ENCODE measurements at regions of chr22 and their contacts with region 1.

Region 1: DNA sequence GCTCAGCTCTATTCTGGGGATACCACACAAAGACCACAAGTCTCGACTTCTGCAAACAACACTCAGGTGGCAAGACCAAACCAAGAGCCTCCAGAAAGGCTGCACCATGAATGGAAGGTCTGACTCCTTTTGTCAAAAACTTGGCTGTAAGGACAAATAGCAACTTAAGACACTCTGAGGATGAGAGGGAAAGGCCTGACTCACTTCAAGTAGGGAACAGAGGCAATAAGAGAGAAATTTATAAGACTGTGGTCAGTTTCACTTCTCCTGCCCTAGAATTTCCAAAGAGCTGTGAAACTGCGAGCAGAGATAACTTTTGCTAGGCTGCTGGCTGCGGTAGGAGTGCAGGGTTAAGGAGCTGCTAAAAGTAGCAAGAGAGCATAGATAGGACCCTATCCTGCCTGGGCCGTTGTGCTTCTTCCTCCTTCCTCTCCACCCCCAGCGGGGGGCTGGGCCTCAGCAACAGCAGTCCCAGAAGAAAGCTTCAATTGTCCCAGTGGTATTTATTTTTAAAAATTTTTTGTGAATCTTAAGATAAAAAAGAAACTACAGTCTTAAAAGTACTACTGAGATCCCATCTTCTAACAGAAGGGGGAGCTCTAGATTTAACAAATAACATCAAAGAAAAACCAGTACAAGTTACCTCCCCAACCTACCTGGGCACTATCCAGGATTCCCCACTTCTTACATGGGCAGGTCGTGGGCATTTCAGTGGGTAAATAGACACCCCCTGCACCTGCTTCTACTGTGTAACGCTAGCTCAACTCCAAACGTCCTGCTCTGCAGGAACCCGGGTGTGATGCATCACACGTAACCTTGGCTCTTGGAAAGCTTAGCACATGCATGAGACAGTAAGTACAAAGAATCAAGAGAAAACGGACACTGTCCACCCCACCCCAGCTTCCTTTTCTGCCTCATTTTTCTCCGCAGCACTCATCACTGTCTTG is 66.4 kb downstream of the SGSM3 start:
- DNase-seq: peak; percentile 84
- ATAC-seq: peak; percentile 67
- H3K4me3 ChIP-seq: peak overlapping the region; percentile 6 to 44 (median 32)
- H3K4me3 Mint-ChIP-seq: peak overlapping the region; percentile 82
- H3K27ac ChIP-seq: peak overlapping the region; percentile 61 to 69
- H3K27ac Mint-ChIP-seq: peak overlapping the region; percentile 94
- H3K4me1 ChIP-seq: peaks cover 83 to 99% of the 10 kb centered on the region in 2 donors
- H3K4me1 Mint-ChIP-seq: peaks cover 87% of the 10 kb centered on the region
- H3K27me3 ChIP-seq: no peaks in the 10 kb centered on the region
- H3K27me3 Mint-ChIP-seq: no peaks in the 10 kb centered on the region
- CTCF ChIP-seq: peak; percentile 82

Region 2: DNA sequence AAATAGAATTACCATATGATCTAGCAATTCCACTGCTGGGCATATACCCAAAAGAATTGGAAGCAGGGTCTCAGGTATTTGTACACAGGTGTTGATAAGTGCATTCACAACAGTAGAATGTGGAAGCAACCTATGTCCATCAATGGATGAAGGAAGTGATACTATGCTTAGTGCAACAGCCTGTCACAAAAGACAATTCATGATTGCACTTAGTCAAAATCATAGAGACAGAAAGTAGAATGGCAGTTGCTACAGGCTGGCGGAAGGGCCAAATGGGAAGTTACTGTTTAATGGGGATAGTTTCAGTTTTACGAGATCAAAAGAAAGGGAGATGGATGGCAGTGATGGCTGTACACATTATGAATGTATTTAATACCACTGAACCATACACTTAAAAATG is 24.3 kb before region 1 on chr22:
- CTCF ChIA-PET with region 1: interaction called, 51 read pairs
- POLR2A ChIA-PET with region 1: interaction called, 7 read pairs
- intact Hi-C with region 1: loop called (anchors 1 kb)
- DNase-seq: peak; percentile 77
- ATAC-seq: peak; percentile 32
- H3K4me3 ChIP-seq: no peak overlapping the region
- H3K4me3 Mint-ChIP-seq: peak overlapping the region; percentile 66
- H3K27ac ChIP-seq: peak overlapping the region; percentile 54 to 57
- H3K27ac Mint-ChIP-seq: peak overlapping the region; percentile 83
- H3K4me1 ChIP-seq: peaks cover 62 to 63% of the 10 kb centered on the region in 2 donors
- H3K4me1 Mint-ChIP-seq: peaks cover 53% of the 10 kb centered on the region
- H3K27me3 ChIP-seq: no peaks in the 10 kb centered on the region
- H3K27me3 Mint-ChIP-seq: no peaks in the 10 kb centered on the region
- CTCF ChIP-seq: no peak

Region 3: DNA sequence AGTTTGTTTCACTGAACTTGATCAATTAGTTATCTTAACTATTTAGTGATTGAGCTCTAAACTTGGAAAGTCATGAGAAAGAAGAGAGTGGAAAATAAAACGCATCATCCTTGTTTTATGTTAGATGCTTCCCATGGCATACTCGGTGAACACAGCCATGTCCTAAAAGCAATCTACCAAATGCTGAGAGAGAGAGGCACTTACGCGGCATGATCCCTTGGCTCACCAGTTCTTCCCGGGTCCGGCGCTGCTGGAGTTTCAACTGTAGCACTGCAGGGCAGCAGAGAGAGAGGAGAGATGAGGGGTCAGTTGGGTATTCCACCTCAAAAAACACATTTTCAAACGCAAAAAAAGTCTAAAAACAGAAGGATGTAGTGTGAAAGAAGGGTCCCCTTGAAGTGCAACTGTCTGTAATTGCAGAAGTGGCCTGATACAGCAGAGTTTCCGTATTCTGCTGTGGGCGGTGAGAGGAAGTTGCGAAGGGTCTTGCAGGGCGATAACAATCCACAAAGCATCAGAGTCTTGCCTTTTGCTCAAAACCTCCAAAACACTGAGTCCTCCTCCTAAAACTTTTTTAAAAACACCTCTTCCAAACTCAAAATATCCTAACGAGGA is 26.3 kb after region 1 on chr22:
- CTCF ChIA-PET with region 1: interaction called, 20 read pairs
- POLR2A ChIA-PET with region 1: no interaction called
- intact Hi-C with region 1: loop called (anchors 1 kb)
- DNase-seq: peak; percentile 77
- ATAC-seq: peak; percentile 88
- H3K4me3 ChIP-seq: peak overlapping the region; percentile 73 to 99 (median 80)
- H3K4me3 Mint-ChIP-seq: peak overlapping the region; percentile 97
- H3K27ac ChIP-seq: peak overlapping the region; percentile 81 to 89
- H3K27ac Mint-ChIP-seq: peak overlapping the region; percentile 98
- H3K4me1 ChIP-seq: peaks cover 36 to 43% of the 10 kb centered on the region in 2 donors
- H3K4me1 Mint-ChIP-seq: peaks cover 55% of the 10 kb centered on the region
- H3K27me3 ChIP-seq: no peaks in the 10 kb centered on the region
- H3K27me3 Mint-ChIP-seq: no peaks in the 10 kb centered on the region
- CTCF ChIP-seq: no peak

Region 4: DNA sequence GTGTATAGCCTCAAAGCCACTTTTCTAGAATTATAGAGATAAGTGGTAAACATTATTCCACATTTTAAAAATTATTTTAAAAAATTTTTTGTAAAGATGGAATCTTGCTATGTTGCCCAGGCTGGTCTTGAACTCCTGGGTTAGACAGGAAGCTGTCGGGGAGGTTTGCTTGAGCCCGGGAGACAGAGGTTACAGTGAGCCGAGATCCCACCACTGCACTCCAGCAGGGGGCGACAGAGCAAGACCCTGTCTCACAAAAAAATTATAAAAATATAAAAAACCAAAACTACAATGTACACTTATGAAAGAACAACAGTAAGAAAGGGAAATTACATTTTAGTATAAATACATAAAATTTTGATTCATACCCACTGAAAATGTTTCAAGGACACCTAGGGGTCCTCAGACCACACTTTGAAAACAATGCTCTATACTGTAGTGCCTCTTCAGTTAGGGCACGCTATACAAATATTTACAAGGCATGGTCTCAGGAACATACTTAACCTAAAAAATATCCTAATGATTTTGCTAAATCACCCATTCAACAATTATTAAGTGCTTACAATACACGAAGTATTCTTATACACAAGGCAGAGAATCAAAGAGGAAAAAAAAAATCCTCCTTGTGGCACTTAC is 88.6 kb after region 1 on chr22:
- CTCF ChIA-PET with region 1: interaction called, 30 read pairs
- POLR2A ChIA-PET with region 1: no interaction called
- intact Hi-C with region 1: loop called (anchors 2 kb)
- DNase-seq: peak; percentile 68
- ATAC-seq: peak; percentile 63
- H3K4me3 ChIP-seq: no peak overlapping the region
- H3K4me3 Mint-ChIP-seq: no peak overlapping the region
- H3K27ac ChIP-seq: no peak overlapping the region
- H3K27ac Mint-ChIP-seq: no peak overlapping the region
- H3K4me1 ChIP-seq: peaks cover 7% of the 10 kb centered on the region in 2 donors
- H3K4me1 Mint-ChIP-seq: peaks cover 19% of the 10 kb centered on the region
- H3K27me3 ChIP-seq: no peaks in the 10 kb centered on the region
- H3K27me3 Mint-ChIP-seq: no peaks in the 10 kb centered on the region
- CTCF ChIP-seq: peak; percentile 89

Region 5: DNA sequence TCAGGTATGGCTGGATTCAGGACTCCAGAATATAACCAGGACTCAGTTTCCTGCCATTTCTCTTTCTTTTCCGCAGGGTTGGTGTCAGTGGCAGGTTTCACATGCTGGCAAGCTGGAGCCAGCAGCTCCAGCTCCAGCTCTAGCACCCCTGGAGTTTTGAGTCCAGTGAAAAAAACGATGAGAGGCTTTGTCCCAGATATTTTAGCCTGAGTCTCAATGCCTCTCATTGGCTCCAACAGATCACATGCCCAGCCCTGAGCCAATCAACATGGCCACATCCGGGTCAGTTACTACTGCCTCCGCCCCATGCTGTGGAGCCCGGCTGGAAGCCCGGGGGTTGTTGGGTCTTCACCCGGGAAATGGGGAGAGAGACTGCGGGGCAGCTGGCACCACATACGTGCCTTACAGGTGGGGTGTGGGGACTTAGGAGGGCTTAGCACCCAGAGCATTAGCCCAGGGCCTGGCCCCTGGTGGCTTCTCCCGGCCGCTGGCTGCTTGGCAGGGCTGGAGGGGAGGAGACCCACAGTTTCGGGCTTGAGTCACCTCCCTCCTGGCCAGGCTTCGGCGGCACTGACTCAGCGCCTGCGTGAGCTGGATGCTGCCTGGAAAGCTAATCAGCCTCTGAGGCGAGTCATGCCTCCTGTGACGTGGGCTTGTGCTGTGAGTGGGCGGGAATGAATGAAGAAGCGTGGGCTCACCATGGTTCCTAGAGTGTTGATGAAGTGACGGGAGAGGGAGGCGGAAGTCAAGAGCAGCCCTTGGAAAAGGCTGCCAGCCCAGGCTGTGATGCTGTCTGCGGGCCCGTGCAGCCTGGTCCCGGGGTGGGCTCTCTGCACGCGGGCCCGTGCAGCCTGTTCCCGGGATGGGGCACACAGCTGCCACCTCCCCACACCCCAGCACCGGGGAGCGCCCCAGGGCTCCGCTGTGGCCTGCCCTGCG is 215.1 kb after region 1 on chr22:
- CTCF ChIA-PET with region 1: interaction called, 232 read pairs
- POLR2A ChIA-PET with region 1: interaction called, 6 read pairs
- intact Hi-C with region 1: no loop called
- DNase-seq: peak; percentile 61
- ATAC-seq: peak; percentile 85
- H3K4me3 ChIP-seq: peak overlapping the region in 4 of 5 experiments; percentile 48 to 59 (median 50)
- H3K4me3 Mint-ChIP-seq: peak overlapping the region; percentile 86
- H3K27ac ChIP-seq: peak overlapping the region; percentile 29 to 41
- H3K27ac Mint-ChIP-seq: peak overlapping the region; percentile 88
- H3K4me1 ChIP-seq: peaks cover 0 to 6% of the 10 kb centered on the region in 2 donors
- H3K4me1 Mint-ChIP-seq: peaks cover 14% of the 10 kb centered on the region
- H3K27me3 ChIP-seq: no peaks in the 10 kb centered on the region
- H3K27me3 Mint-ChIP-seq: no peaks in the 10 kb centered on the region
- CTCF ChIP-seq: no peak

Region 6: GRCh38 chr22:40898850-40899357 is 462.1 kb after region 1 on chr22:
- CTCF ChIA-PET with region 1: interaction called, 14 read pairs
- POLR2A ChIA-PET with region 1: no interaction called
- intact Hi-C with region 1: loop called (anchors 2 kb)
- DNase-seq: peak; percentile 65
- ATAC-seq: peak; percentile 57
- H3K4me3 ChIP-seq: no peak overlapping the region
- H3K4me3 Mint-ChIP-seq: no peak overlapping the region
- H3K27ac ChIP-seq: no peak overlapping the region
- H3K27ac Mint-ChIP-seq: no peak overlapping the region
- H3K4me1 ChIP-seq: no peaks in the 10 kb centered on the region
- H3K4me1 Mint-ChIP-seq: peaks cover 5% of the 10 kb centered on the region
- H3K27me3 ChIP-seq: no peaks in the 10 kb centered on the region
- H3K27me3 Mint-ChIP-seq: no peaks in the 10 kb centered on the region
- CTCF ChIP-seq: peak; percentile 63

Measured in B cell (primary cell).